PC-3 (cell line): ENCODE measurements at regions of chr12 and their contacts with region 1.

Region 1: DNA sequence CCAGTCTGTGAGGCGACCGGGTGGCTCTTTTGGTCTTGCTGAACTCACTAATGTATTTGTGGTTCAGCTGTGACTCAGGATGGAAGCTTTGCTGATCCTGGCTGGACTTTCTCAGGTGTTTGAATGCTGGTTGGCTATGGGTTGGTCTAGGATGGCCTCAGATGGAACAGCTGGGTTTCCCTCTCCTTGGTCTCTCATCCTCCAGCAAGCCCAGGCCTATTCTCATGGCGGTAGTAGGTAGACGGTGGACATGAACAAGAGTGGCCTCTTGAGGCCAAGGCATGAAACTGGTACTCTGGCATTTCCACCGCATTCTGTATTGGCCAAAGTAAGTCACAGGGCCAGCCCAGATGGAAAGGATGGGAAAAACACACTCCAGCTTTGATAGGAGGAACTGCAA is 11.8 kb upstream of the POLR3B start:
- DNase-seq: peak; percentile 76
- ATAC-seq: peak; percentile 54
- H3K4me3 ChIP-seq: no peak overlapping the region
- H3K27ac ChIP-seq: no peak overlapping the region
- H3K4me1 ChIP-seq: peaks cover 15% of the 10 kb centered on the region
- H3K27me3 ChIP-seq: no peaks in the 10 kb centered on the region
- CTCF ChIP-seq: peak; percentile 75

Region 2: DNA sequence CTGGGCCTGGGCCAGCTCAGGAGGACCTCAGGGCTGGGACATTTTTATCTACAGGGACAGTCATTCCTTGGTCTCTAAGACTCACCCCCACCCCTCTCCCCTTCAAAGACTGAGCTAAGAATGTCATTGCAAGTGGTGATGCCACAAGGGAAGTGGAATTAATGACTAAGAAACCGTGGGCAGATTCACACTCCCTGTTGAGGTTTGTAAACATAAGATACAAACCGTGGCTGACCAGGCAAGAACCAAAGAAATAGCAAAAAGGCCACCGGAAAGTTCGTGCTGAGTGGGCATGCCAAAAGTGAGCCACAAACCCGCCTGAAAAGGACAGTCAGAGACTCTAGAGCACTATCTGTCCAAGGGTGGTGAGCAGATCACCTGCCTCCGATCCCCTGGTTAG is 232.7 kb before region 1 on chr12:
- CTCF ChIA-PET with region 1: no interaction called
- POLR2A ChIA-PET with region 1: no interaction called
- intact Hi-C with region 1: no loop called
- DNase-seq: peak; percentile 81
- ATAC-seq: peak; percentile 66
- H3K4me3 ChIP-seq: peak overlapping the region; percentile 29; the same call in 1 of the 2 replicates
- H3K27ac ChIP-seq: peak overlapping the region; percentile 48
- H3K4me1 ChIP-seq: peaks cover 39% of the 10 kb centered on the region
- H3K27me3 ChIP-seq: no peaks in the 10 kb centered on the region
- CTCF ChIP-seq: no peak

Region 3: DNA sequence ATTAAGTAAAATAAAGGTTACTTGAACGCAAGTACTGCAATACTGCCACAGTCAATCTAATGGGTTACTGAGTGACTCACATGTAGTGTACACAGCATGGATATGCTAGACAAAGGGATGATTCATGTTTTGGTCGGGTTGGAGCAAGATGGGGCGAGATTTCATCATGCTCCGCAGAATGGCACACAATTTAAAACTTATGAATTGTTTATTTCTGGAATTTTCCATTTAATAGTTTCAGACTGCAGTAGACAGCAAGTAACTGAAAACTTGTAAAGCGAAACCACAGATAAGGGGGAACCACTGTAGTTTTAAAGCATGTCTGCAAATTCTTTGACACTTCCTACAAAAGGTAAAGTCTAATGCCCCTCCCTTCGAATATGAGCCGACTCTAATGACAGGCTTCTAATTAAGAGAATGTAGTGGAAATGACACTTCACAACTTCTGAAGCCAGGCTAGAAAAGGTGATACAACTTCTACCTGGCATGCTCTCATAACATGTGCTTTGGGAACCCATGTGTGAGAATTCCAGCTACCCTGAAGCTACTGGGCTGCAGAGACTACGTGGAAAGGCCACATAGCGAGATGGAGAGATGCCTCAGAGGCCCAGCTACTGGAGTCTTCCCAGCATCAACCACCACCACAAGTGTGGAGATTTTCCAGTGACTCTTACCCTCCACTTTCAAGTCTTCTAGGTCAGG is 57.1 kb before region 1 on chr12:
- CTCF ChIA-PET with region 1: no interaction called
- POLR2A ChIA-PET with region 1: no interaction called
- intact Hi-C with region 1: loop called (anchors 5 kb)
- DNase-seq: peak; percentile 97
- ATAC-seq: peak; percentile 92
- H3K4me3 ChIP-seq: no peak overlapping the region
- H3K27ac ChIP-seq: peak overlapping the region; percentile 96
- H3K4me1 ChIP-seq: peaks cover 50% of the 10 kb centered on the region
- H3K27me3 ChIP-seq: no peaks in the 10 kb centered on the region
- CTCF ChIP-seq: no peak